ENCODE measurements at regions of chr5 and their contacts with region 1.

Region 1: GRCh38 chr5:77645158-77645994 is 6.9 kb upstream of the OTP start:
- DNase-seq: peak; percentile 66
- ATAC-seq: peak; percentile 83
- H3K4me3 Mint-ChIP-seq: peak overlapping the region; percentile 75
- H3K27ac Mint-ChIP-seq: no peak overlapping the region
- H3K4me1 Mint-ChIP-seq: peaks cover 15% of the 10 kb centered on the region
- H3K27me3 Mint-ChIP-seq: peaks cover 65% of the 10 kb centered on the region
- CTCF ChIP-seq: no peak

Region 2: GRCh38 chr5:77630258-77631089 is 14.9 kb before region 1 on chr5:
- CTCF ChIA-PET with region 1: no interaction called
- POLR2A ChIA-PET with region 1: no interaction called
- intact Hi-C with region 1: loop called (anchors 1 kb)
- DNase-seq: peak; percentile 49
- ATAC-seq: peak; percentile 79
- H3K4me3 Mint-ChIP-seq: peak overlapping the region; percentile 82
- H3K27ac Mint-ChIP-seq: peak overlapping the region; percentile 56
- H3K4me1 Mint-ChIP-seq: peaks cover 28% of the 10 kb centered on the region
- H3K27me3 Mint-ChIP-seq: peaks cover 41% of the 10 kb centered on the region
- CTCF ChIP-seq: no peak

Region 3: DNA sequence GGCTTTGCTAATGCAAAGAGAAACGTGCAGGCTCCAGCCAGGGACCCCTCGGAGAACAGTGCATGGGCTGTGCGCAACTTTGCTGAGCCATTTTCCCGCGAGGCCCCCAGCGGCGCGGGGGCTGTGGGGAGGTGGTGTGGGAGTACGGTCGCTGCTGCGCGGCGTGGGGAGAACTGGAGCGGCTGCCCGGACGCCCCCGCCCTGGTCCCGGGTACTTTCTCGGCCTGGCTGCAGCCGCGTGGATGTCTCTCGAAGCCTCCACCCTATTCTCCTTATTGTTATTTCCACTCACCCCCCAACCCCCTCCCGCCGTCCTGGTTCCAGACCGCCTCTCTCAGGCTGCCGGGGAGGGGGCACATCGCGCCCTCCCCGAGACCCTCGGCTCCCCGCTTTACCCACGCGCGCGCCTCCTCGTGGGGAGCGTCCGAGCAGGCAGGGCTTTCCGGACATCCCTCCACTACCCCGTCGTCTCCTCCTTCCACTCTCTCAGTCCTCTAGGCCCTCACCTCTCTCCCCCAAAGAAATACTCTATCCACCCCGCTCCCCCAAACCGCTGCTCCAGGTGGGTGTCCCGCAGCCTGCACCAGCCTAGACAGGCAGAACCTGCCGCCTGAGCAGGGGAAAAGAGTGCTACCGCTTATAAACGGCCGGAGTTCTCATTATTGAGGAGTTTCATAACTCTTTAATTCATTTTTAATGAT is 199.4 kb after region 1 on chr5:
- CTCF ChIA-PET with region 1: no interaction called
- POLR2A ChIA-PET with region 1: no interaction called
- intact Hi-C with region 1: loop called (anchors 5 kb)
- DNase-seq: no peak
- ATAC-seq: peak; percentile 45
- H3K4me3 Mint-ChIP-seq: peak overlapping the region; percentile 83
- H3K27ac Mint-ChIP-seq: no peak overlapping the region
- H3K4me1 Mint-ChIP-seq: peaks cover 10% of the 10 kb centered on the region
- H3K27me3 Mint-ChIP-seq: peaks cover 25% of the 10 kb centered on the region
- CTCF ChIP-seq: no peak

Measured in activated B cell treated with CpG ODN at 0.5 μM for 24 hours (primary cell).